ENCODE measurements at regions of chr9 and their contacts with region 1.

Region 1: GRCh38 chr9:36597412-36598178 is 24.9 kb downstream of the MELK start:
- DNase-seq: no peak
- H3K4me3 ChIP-seq: no peak overlapping the region
- H3K27me3 ChIP-seq: no peaks in the 10 kb centered on the region
- CTCF ChIP-seq: peak; percentile 84

Region 2: GRCh38 chr9:36566813-36567221 is 30.8 kb before region 1 on chr9:
- CTCF ChIA-PET with region 1: no interaction called
- POLR2A ChIA-PET with region 1: no interaction called
- DNase-seq: no peak
- H3K4me3 ChIP-seq: no peak overlapping the region
- H3K27me3 ChIP-seq: no peaks in the 10 kb centered on the region
- CTCF ChIP-seq: no peak

Region 3: DNA sequence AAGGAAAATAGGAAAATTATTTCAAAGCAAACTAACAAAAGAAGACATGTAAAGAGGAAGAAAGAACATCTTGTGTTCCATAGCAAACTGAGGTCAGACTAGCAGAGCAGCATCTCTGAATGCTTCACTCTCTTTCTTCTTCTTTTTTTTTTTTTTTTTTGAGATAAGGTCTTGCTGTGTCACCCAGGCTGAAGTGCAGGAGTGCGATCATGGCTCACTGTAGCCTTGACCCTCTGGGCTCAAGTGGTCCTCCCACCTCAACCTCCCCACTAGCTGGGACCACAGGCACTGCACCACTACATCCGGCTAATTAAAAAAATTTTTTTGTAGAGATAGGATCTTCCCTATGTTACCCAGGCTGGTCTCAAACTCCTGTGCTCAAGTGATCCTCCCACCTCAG is 11.7 kb after region 1 on chr9:
- CTCF ChIA-PET with region 1: interaction called, 24 read pairs
- POLR2A ChIA-PET with region 1: no interaction called
- DNase-seq: no peak
- H3K4me3 ChIP-seq: no peak overlapping the region
- H3K27me3 ChIP-seq: no peaks in the 10 kb centered on the region
- CTCF ChIP-seq: no peak

Region 4: DNA sequence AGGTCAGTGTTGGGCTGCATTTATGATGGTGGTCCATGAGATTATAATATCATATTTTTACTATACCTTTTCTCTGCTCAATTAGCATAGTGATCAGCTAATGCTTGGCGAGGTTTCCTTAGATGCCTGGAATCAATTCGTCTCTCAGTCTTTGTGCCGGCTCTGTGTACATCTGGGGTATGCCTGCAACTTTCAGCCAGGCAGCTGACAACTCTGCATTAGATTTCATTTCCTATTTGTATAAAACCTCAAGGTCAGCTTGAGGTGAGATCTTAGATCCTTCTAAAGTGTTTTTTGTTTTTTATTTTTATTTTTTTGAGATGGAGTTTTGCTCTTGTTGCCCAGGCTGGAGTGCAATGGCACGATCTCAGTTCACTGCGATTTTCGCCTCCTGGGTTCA is 61.9 kb after region 1 on chr9:
- CTCF ChIA-PET with region 1: no interaction called
- POLR2A ChIA-PET with region 1: no interaction called
- DNase-seq: no peak
- H3K4me3 ChIP-seq: no peak overlapping the region
- H3K27me3 ChIP-seq: no peaks in the 10 kb centered on the region
- CTCF ChIP-seq: no peak

Region 5: GRCh38 chr9:36728651-36729520 is 131.3 kb after region 1 on chr9:
- CTCF ChIA-PET with region 1: interaction called, 12 read pairs
- POLR2A ChIA-PET with region 1: no interaction called
- DNase-seq: peak; percentile 2
- H3K4me3 ChIP-seq: no peak overlapping the region
- H3K27me3 ChIP-seq: peaks cover 3% of the 10 kb centered on the region
- CTCF ChIP-seq: peak; percentile 74

Measured in BJ (cell line).